Kidney (tissue), 22 donors: ENCODE measurements at regions of chr20 and their contacts with region 1.

Region 1: DNA sequence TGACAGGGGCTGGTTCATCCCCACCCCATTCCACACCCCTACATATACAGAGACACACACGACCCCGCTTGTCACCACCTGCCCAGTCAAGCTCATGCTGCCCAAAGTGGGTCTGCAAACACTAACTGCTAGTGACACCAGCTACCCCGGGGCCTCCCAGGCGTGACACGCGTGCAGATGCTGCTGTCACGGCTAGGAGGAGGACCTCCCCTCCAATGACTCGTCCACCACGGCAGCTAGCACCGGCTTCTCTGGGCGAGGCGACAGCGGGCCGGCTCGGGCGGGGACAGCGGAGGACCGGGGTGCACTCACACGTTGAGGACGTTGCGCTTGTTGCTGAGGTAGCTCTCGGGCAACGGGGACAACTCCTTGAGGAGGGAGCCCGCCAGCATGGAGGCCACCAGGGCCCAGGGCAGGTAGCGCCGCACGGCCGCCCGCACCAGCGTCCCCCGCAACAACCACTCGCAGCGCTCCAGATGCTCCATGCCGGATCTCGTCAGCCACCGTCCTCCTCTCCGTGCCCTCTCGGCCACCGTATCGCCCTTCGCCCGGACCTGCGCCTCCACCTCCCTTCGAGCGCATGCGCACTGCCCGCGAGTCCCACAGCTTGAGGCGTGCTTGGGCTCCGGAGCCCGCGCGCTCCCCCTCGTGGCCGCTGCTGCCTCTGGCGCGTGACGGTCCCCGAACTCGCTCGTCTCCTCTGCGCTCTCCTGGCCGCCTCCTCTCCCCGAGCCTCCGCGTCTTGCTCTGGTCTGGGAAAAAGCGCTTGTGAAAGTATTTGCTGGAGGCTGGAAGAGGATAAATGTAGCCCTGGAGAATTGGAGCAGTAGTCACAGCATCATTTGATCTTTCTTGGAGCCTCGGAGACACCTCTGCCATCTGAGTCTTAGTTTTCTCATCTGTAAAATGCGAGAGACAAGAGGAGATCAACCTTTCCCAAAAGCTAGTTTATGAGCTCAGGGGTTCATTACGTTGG is at the start of gene FITM2:
- DNase-seq: peak; percentile 97 to 99 (median 98)
- H3K4me3 ChIP-seq: peak within 1 kb of the TSS; percentile 88 to 97 (median 97)
- H3K27ac ChIP-seq: peak within 1 kb of the TSS; percentile 57 to 74
- H3K4me1 ChIP-seq: peaks cover 0 to 13% (median 7%) of the 10 kb centered on the region in 3 donors
- H3K27me3 ChIP-seq: no peaks in the 10 kb centered on the region
- CTCF ChIP-seq: peak; percentile 95
- total RNA-seq, gene FITM2: 10.0 TPM

Region 2: GRCh38 chr20:44217342-44218092 is 93.4 kb before region 1 on chr20:
- intact Hi-C with region 1: loop called (anchors 5 kb)
- DNase-seq: peak in 4 of 5 donors; percentile 45 to 70 (median 57)
- H3K4me3 ChIP-seq: no peak overlapping the region
- H3K27ac ChIP-seq: no peak overlapping the region
- H3K4me1 ChIP-seq: no peaks in the 10 kb centered on the region
- H3K27me3 ChIP-seq: no peaks in the 10 kb centered on the region
- CTCF ChIP-seq: peak; percentile 66